ENCODE measurements at regions of chr20 and their contacts with region 1.

Region 1: DNA sequence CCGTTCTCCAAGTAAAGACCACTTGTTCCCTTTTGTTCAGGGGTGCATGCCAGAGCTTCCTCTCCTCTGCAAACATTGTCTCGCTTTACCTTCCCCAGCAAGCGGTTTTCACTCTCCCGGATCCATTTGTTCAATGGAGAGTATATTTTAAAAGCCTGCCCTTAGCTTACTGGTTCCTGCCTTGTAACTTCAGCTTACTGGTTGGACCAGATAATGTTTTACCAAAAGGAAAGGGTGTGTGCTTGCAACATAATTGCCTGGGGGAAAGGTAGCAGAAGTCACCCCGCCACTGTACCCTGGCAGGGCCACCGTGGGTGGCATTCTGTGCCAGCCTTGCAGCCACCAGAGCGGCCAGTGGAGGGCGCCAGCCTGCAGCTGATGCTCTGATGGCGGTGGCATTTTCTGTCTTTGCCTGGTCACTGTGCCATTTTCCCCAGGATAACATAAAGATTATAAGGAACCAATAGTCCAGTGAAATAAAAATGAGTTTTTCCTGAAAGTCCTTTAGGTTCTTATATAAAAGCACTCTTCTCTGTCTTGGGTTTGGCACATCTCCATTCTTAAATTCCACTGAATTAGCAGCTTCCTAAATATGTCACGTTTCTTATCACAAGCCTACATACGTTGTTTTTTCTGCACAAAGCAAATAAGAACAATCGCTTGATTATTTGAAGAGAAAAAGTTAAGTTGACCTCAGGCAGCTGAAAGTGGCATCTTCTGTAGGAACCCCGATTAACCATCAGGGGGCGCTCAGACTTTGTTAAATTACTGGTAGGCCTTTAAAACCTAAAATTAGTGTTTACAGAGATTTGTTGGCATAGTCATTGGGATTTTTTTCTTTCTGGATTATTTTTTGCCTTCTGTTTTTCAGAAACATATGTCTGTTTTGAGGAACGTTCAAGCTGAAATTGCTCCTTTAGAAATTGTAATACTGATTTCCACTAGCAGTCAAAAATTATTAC is 67.4 kb upstream of the XRN2 start:
- DNase-seq: peak; percentile 24 to 69 (median 65)
- ATAC-seq: peak; percentile 84
- H3K4me3 ChIP-seq: no peak overlapping the region
- H3K4me3 Mint-ChIP-seq: no peak overlapping the region
- H3K27ac ChIP-seq: no peak overlapping the region
- H3K27ac Mint-ChIP-seq: no peak overlapping the region
- H3K4me1 ChIP-seq: no peaks in the 10 kb centered on the region
- H3K4me1 Mint-ChIP-seq: peaks cover 0 to 6% (median 4%) of the 10 kb centered on the region in 7 donors
- H3K27me3 ChIP-seq: no peaks in the 10 kb centered on the region
- H3K27me3 Mint-ChIP-seq: no peaks in the 10 kb centered on the region

Region 2: DNA sequence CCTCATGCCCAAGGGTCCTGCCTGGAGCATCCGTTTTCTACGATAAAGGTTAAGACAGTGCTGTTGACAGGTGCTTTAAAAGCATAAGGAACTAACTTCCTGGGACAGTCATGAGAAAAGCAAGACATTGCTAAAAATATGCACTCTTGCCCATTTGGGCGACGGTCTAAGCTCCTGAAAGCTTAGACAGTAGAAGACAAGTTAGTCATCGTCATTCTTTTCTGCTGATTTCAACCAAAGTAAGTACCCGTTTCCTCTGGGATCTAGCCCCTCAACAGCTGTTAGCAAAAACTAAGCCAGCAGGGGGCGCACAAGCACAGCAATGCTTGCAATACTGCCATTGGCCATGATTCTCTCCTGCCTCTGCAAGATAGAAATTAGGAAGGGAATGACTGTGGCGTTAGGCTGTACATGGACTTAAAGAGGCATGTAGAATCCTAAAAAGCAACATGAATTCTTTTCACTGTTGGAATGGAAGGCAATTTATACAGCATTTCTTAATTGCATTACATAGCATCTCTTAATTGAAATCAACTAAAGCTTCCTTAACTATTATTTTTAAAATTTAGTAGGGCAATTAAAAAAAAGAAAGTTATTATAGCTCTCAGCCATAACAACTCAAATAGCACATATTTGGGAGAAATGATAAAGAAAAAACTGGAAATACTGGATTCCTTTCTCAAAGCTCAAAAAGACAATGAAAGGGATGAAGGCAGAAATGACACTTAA is 375.5 kb before region 1 on chr20:
- CTCF ChIA-PET with region 1: interaction called, 4 read pairs
- POLR2A ChIA-PET with region 1: no interaction called
- intact Hi-C with region 1: loop called (anchors 1 to 5 kb)
- DNase-seq: peak; percentile 44 to 80 (median 64)
- ATAC-seq: peak; percentile 81
- H3K4me3 ChIP-seq: no peak overlapping the region
- H3K4me3 Mint-ChIP-seq: no peak overlapping the region
- H3K27ac ChIP-seq: no peak overlapping the region
- H3K27ac Mint-ChIP-seq: no peak overlapping the region
- H3K4me1 ChIP-seq: no peaks in the 10 kb centered on the region
- H3K4me1 Mint-ChIP-seq: peaks cover 0 to 1% (median 0%) of the 10 kb centered on the region in 7 donors
- H3K27me3 ChIP-seq: no peaks in the 10 kb centered on the region
- H3K27me3 Mint-ChIP-seq: peaks cover 13 to 38% (median 31%) of the 10 kb centered on the region in 5 donors

Region 3: GRCh38 chr20:21208999-21209398 is 26.8 kb before region 1 on chr20:
- CTCF ChIA-PET with region 1: no interaction called
- POLR2A ChIA-PET with region 1: no interaction called
- intact Hi-C with region 1: no loop called
- DNase-seq: no peak
- ATAC-seq: no peak
- H3K4me3 ChIP-seq: no peak overlapping the region
- H3K4me3 Mint-ChIP-seq: no peak overlapping the region
- H3K27ac ChIP-seq: no peak overlapping the region
- H3K27ac Mint-ChIP-seq: no peak overlapping the region
- H3K4me1 ChIP-seq: no peaks in the 10 kb centered on the region
- H3K4me1 Mint-ChIP-seq: no peaks in the 10 kb centered on the region
- H3K27me3 ChIP-seq: no peaks in the 10 kb centered on the region
- H3K27me3 Mint-ChIP-seq: no peaks in the 10 kb centered on the region

Region 4: GRCh38 chr20:21352703-21353102 is 116.9 kb after region 1 on chr20:
- CTCF ChIA-PET with region 1: interaction called, 3 read pairs
- POLR2A ChIA-PET with region 1: no interaction called
- intact Hi-C with region 1: loop called in 1 of 2 experiments (anchors 5 kb)
- DNase-seq: no peak
- ATAC-seq: no peak
- H3K4me3 ChIP-seq: no peak overlapping the region
- H3K4me3 Mint-ChIP-seq: no peak overlapping the region
- H3K27ac ChIP-seq: no peak overlapping the region
- H3K27ac Mint-ChIP-seq: no peak overlapping the region
- H3K4me1 ChIP-seq: no peaks in the 10 kb centered on the region
- H3K4me1 Mint-ChIP-seq: no peaks in the 10 kb centered on the region
- H3K27me3 ChIP-seq: no peaks in the 10 kb centered on the region
- H3K27me3 Mint-ChIP-seq: no peaks in the 10 kb centered on the region

Region 5: DNA sequence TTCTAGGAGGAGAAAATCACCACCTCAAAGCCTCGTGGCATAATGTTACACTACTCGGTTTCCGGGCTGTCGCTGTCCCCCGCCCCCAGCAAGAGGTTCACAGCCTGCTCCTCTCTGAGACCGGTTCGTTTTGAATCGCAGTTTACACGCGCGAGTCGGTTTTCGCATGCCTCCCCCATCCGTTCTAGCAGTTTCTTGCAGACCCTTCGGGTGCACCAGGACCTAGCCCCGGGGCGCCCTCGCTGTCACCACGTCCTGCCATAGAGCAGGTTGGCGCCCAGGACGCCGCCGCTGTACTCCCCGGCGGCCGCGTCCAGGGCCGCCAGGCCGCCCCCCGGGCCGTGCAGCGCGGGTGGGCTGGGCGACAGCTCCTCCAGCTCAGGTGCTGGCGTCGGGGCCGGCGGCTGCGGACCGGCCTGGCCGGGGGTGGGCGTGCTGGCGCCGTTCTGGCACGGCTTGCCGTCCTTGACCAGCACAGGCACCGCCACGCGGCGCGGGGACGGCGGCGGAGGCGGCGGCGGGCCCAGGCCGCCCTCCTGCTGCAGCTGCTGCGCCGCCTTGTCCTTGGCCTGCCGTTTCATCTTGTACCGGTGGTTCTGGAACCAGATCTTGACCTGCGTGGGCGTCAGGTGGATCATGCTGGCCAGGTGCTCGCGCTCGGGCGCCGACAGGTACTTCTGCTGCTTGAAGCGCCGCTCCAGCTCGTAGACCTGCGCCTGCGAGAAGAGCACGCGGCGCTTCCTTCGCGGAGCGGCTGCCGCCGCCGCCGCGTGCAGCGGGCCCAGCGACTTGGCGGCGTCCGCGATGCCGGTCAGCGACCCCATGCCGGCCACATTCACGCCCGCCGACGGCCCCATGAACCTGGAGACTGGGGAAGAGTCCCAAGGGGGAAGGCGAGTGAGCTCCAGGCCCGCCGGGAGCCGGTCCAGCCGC is 160.2 kb after region 1 on chr20:
- CTCF ChIA-PET with region 1: no interaction called
- POLR2A ChIA-PET with region 1: no interaction called
- intact Hi-C with region 1: loop called in 1 of 2 experiments (anchors 2 kb)
- DNase-seq: peak; percentile 21 to 77 (median 67)
- ATAC-seq: peak; percentile 86
- H3K4me3 ChIP-seq: no peak overlapping the region
- H3K4me3 Mint-ChIP-seq: peak overlapping the region; percentile 39 to 85 (median 76)
- H3K27ac ChIP-seq: no peak overlapping the region
- H3K27ac Mint-ChIP-seq: peak overlapping the region in 6 of 9 donors; percentile 16 to 76 (median 60)
- H3K4me1 ChIP-seq: peaks cover 0 to 16% of the 10 kb centered on the region in 2 donors
- H3K4me1 Mint-ChIP-seq: peaks cover 11 to 37% (median 30%) of the 10 kb centered on the region in 7 donors
- H3K27me3 ChIP-seq: peaks cover 43 to 63% of the 10 kb centered on the region in 2 donors
- H3K27me3 Mint-ChIP-seq: peaks cover 63 to 80% (median 75%) of the 10 kb centered on the region in 5 donors

Region 6: GRCh38 chr20:21571841-21572690 is 336.3 kb after region 1 on chr20:
- CTCF ChIA-PET with region 1: interaction called, 6 read pairs
- POLR2A ChIA-PET with region 1: no interaction called
- intact Hi-C with region 1: loop called in 1 of 2 experiments (anchors 2 kb)
- DNase-seq: peak in 4 of 9 donors; percentile 18 to 34 (median 29)
- ATAC-seq: peak; percentile 46
- H3K4me3 ChIP-seq: no peak overlapping the region
- H3K4me3 Mint-ChIP-seq: no peak overlapping the region
- H3K27ac ChIP-seq: no peak overlapping the region
- H3K27ac Mint-ChIP-seq: no peak overlapping the region
- H3K4me1 ChIP-seq: peaks cover 0 to 11% of the 10 kb centered on the region in 2 donors
- H3K4me1 Mint-ChIP-seq: peaks cover 0 to 12% (median 6%) of the 10 kb centered on the region in 7 donors
- H3K27me3 ChIP-seq: no peaks in the 10 kb centered on the region
- H3K27me3 Mint-ChIP-seq: peaks cover 16 to 37% (median 29%) of the 10 kb centered on the region in 5 donors

Region 7: GRCh38 chr20:21615617-21616080 is 379.9 kb after region 1 on chr20:
- CTCF ChIA-PET with region 1: interaction called, 4 read pairs
- POLR2A ChIA-PET with region 1: no interaction called
- intact Hi-C with region 1: loop called (anchors 1 to 5 kb)
- DNase-seq: peak in 7 of 9 donors; percentile 13 to 38 (median 24)
- ATAC-seq: no peak
- H3K4me3 ChIP-seq: no peak overlapping the region
- H3K4me3 Mint-ChIP-seq: no peak overlapping the region
- H3K27ac ChIP-seq: no peak overlapping the region
- H3K27ac Mint-ChIP-seq: no peak overlapping the region
- H3K4me1 ChIP-seq: no peaks in the 10 kb centered on the region
- H3K4me1 Mint-ChIP-seq: peaks cover 0 to 6% (median 0%) of the 10 kb centered on the region in 7 donors
- H3K27me3 ChIP-seq: no peaks in the 10 kb centered on the region
- H3K27me3 Mint-ChIP-seq: peaks cover 9 to 55% (median 42%) of the 10 kb centered on the region in 5 donors